Endothelial cell of umbilical vein (primary cell): ENCODE measurements at regions of chr12 and their contacts with region 1.

Region 1: GRCh38 chr12:101280006-101280505 is at the start of gene UTP20:
- DNase-seq: peak; percentile 94
- H3K4me3 ChIP-seq: peak within 1 kb of the TSS; percentile 74 to 99 (median 95)
- H3K27ac ChIP-seq: peak within 1 kb of the TSS; percentile 59
- H3K4me1 ChIP-seq: peaks cover 7% of the 10 kb centered on the region
- H3K27me3 ChIP-seq: peaks cover 10 to 11% of the 10 kb centered on the region in 2 experiments
- CTCF ChIP-seq: no peak
- POLR2A ChIP-seq: peak; percentile 61
- total RNA-seq, gene UTP20: 21.5 and 23.1 TPM in 2 replicates

Region 2: DNA sequence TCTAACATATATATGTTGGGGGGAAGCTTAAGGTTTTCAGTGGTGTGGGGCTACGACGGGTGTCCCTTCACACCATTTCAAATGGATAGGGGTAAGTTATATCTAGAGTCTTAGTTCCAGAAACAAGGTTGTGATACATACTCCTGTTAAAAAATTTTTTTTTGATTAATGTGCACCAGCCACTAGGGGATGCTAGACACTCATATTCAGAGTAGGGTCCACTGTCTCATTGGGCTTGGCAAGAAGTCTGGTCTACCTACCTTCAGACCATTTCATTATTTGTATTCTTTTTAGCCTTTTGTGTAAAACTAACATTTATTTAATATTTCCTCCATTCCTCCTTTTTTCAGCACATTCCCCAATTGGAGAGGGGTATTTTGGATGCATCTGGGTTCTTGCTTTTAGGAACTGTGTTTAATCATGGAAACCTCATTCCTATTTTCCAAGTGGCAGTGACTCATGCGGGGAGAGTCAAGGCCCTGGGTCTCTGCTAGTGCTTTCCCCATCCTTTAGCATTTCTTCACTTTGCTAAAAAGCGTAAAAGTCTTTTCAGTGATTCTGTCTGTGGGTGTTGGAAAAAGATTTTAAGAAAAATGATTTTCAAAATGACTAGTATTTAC is 452.0 kb before region 1 on chr12:
- CTCF ChIA-PET with region 1: interaction called, 9 read pairs
- POLR2A ChIA-PET with region 1: no interaction called
- dilution Hi-C with region 1: no loop called
- intact Hi-C with region 1: loop called (anchors 1 kb)
- DNase-seq: peak; percentile 24
- H3K4me3 ChIP-seq: no peak overlapping the region
- H3K27ac ChIP-seq: no peak overlapping the region
- H3K4me1 ChIP-seq: no peaks in the 10 kb centered on the region
- H3K27me3 ChIP-seq: no peaks in the 10 kb centered on the region
- CTCF ChIP-seq: peak; percentile 26 to 42
- POLR2A ChIP-seq: no peak

Region 3: DNA sequence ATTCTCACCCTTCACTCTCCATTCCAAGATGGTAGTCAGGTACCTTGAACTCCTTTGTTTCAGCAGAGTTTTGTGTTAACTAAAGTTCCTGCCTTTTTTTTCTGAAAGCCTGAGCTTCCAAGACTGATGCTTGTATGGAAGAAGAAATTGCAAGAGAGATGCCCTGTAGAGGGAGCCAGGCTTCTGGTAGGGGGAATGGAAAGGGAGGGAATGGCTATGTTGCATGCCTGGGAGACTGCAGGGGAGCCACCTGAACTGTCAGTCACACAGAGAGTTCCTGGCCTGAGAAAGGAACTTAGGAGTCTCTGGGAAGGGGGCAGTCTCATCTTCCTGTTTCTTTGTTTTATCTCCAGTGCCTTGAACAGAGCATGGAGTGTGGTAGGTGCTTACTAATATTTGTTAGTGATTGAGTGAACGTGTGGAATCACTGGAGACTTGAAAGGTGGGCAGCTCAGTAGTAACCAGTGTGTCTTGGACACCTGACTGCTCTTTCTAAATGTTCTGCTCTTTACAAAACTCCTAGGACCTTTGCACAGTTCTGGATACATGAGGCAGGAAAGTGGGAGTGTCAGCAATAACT is 353.3 kb before region 1 on chr12:
- CTCF ChIA-PET with region 1: no interaction called
- POLR2A ChIA-PET with region 1: no interaction called
- dilution Hi-C with region 1: no loop called
- intact Hi-C with region 1: loop called (anchors 10 kb)
- DNase-seq: peak; percentile 21
- H3K4me3 ChIP-seq: no peak overlapping the region
- H3K27ac ChIP-seq: no peak overlapping the region
- H3K4me1 ChIP-seq: no peaks in the 10 kb centered on the region
- H3K27me3 ChIP-seq: no peaks in the 10 kb centered on the region
- CTCF ChIP-seq: peak in 1 of 2 donors; percentile 17
- POLR2A ChIP-seq: no peak

Region 4: DNA sequence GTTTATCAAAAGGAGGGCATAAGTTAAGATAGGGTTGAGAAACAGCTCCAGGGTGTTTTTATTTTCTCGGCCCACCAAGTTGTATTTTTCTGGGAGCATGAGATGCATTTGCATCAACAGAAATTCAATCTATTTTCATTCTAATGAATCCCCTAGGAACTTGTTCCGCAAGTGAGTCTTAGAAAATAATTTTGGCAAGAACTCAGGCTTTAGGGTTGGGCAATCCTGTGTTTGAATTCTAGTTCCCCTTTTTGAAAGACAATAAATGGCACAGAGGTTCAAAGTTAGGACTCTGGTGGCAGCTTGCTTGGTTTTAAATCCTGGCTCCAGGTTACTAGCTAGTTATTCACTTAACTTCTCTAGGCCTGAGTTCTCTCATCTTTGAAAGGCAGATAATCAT is 93.8 kb before region 1 on chr12:
- CTCF ChIA-PET with region 1: no interaction called
- POLR2A ChIA-PET with region 1: no interaction called
- dilution Hi-C with region 1: no loop called
- intact Hi-C with region 1: no loop called
- DNase-seq: no peak
- H3K4me3 ChIP-seq: no peak overlapping the region
- H3K27ac ChIP-seq: no peak overlapping the region
- H3K4me1 ChIP-seq: no peaks in the 10 kb centered on the region
- H3K27me3 ChIP-seq: no peaks in the 10 kb centered on the region
- CTCF ChIP-seq: no peak
- POLR2A ChIP-seq: no peak

Region 5: DNA sequence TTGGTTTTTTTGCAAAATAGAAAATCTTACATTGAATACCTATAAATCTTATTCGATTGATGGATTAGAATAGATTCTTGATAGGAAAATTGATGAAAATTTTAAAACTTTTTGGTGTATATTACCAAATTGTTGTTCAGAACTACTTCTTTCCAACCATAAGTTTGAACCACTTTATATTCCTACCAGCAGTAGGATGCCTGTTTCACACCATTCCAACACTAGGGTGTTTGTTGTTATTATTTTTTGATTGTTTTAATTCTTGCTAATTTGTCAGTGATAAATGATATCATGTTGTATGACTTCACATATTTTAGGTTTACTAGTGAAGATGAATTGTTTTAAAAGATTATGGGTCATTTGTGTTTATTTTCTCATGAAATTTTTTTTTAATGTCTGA is 43.2 kb after region 1 on chr12:
- CTCF ChIA-PET with region 1: interaction called, 6 read pairs
- POLR2A ChIA-PET with region 1: no interaction called
- dilution Hi-C with region 1: no loop called
- intact Hi-C with region 1: loop called (anchors 1 kb)
- DNase-seq: no peak
- H3K4me3 ChIP-seq: no peak overlapping the region
- H3K27ac ChIP-seq: no peak overlapping the region
- H3K4me1 ChIP-seq: no peaks in the 10 kb centered on the region
- H3K27me3 ChIP-seq: no peaks in the 10 kb centered on the region
- CTCF ChIP-seq: no peak
- POLR2A ChIP-seq: no peak

Region 6: GRCh38 chr12:101372431-101372830 is 92.4 kb after region 1 on chr12:
- CTCF ChIA-PET with region 1: no interaction called
- POLR2A ChIA-PET with region 1: no interaction called
- dilution Hi-C with region 1: no loop called
- intact Hi-C with region 1: no loop called
- DNase-seq: no peak
- H3K4me3 ChIP-seq: no peak overlapping the region
- H3K27ac ChIP-seq: no peak overlapping the region
- H3K4me1 ChIP-seq: no peaks in the 10 kb centered on the region
- H3K27me3 ChIP-seq: no peaks in the 10 kb centered on the region
- CTCF ChIP-seq: no peak
- POLR2A ChIP-seq: no peak

Region 7: DNA sequence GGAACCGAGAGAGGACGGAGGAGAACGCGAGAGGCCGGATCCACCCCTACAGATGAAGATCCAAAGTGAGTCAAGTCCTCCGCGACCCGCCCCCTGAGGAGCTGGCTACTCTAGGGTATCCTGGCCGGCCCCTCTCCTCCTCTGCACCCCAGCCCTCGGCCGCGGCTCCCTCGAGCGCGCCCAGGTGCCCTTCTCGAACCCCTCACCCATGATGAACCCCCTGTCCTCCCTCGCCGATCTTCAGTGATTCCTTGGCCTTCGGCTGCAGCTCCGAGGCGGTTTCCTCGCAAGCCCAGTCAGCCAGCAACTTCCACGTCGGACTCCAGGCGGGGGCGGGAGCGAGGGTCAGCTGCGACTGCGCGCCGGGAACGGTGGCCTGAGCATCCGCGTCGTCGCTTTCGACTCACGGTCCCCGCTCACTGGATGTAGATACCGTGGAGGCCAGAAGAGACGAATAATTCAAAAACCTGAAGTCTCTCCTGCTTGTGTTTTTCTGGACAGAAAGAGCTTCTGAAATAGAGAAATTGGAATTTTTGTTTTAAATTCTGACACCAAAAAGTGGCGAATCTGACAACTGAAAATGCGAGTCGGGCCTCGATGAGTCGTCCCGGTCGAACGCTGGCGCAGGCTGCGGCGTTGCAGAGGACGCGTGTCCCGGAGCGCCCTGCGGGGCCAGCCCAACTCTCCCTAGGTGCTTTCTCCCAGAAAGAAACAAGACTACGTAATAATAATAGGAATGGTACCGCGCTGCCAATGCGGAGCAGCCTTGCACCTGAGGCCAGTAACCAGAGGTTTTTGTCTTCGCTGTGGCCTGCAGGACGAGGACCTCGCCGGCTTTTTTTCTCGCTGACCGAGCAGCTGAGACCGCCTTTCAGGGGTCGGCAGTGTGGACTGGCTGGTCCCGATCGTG is 127.6 kb after region 1 on chr12 and contains the start of gene ARL1:
- CTCF ChIA-PET with region 1: no interaction called
- POLR2A ChIA-PET with region 1: no interaction called
- dilution Hi-C with region 1: no loop called
- intact Hi-C with region 1: loop called (anchors 5 kb)
- DNase-seq: peak; percentile 91
- H3K4me3 ChIP-seq: peak within 1 kb of the TSS; percentile 39 to 88 (median 71)
- H3K27ac ChIP-seq: peak within 1 kb of the TSS; percentile 99
- H3K4me1 ChIP-seq: peaks cover 13% of the 10 kb centered on the region
- H3K27me3 ChIP-seq: peaks cover 0 to 4% of the 10 kb centered on the region in 2 experiments
- CTCF ChIP-seq: no peak
- POLR2A ChIP-seq: peak; percentile 66
- total RNA-seq, gene ARL1: 65.4 and 76.5 TPM in 2 replicates